ENCODE measurements at regions of chr12 and their contacts with region 1.

Region 1: DNA sequence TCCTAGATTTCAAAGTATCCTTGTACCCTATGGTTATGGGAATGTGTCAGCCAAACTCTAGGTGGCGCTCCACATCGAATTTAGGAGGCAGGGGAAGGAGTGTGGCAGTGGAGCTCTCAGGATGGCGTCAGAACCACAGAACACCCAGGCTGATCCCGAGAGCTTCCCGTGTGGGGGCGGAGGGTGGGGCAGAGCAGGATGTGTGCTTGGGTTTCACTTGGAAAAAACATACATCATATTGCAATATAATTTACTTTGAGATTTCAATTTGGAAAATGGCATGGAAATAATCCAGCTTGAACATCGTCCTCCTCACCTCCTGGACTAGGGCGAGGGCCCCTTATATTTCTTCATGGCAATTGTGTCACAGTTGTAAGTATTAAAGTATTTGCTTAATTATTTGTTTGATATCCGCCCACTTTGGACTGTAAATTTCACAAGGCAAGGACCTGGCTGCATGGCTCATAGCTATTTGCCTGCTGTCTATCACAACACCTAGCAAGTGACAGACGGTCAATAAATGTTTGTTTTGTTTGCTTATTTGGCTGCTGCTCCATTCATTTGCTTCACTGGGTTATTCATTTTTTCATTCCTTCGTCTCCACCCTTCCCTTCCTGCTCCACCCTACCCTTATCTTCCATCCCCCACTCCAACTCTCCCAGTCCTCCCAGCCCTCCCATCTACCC is 221.5 kb upstream of the HMGA2 start:
- DNase-seq: peak; percentile 76
- ATAC-seq: peak; percentile 90
- H3K4me3 ChIP-seq: peak overlapping the region; percentile 39 to 59
- H3K27ac ChIP-seq: peak overlapping the region; percentile 87
- H3K4me1 ChIP-seq: peaks cover 34% of the 10 kb centered on the region
- H3K27me3 ChIP-seq: no peaks in the 10 kb centered on the region
- CTCF ChIP-seq: peak; percentile 81

Region 2: DNA sequence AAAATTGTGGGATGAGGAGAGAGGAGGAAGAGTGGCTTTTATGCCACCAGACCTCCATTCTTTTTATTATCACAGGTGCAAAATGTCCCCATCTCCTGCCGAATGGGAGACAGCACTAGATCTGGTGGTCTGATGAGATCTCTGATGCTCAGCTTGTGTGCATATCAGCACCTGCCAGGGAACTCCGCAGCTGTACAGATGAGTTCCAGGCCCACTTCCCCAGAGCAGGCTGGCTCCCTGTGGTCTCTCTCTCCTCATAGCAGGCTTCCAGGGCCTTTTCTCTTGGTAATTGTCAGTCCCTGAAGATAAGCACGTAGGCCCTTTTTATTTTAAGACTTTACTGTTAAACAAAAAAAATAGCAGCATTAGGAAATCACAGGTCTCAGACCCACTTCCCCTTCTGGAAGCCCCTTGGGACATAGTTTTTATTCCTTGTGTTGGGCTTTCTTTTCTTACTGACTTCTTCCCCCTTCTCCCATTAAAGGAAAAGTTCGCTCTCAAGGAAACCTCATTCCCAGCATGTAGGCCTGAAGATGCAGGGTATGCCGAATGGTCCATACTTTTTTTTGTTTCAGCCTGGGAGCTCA is 782.8 kb before region 1 on chr12:
- CTCF ChIA-PET with region 1: interaction called, 13 read pairs
- POLR2A ChIA-PET with region 1: no interaction called
- in situ Hi-C with region 1: no loop called
- intact Hi-C with region 1: no loop called
- DNase-seq: no peak
- ATAC-seq: no peak
- H3K4me3 ChIP-seq: no peak overlapping the region
- H3K27ac ChIP-seq: no peak overlapping the region
- H3K4me1 ChIP-seq: no peaks in the 10 kb centered on the region
- H3K27me3 ChIP-seq: no peaks in the 10 kb centered on the region
- CTCF ChIP-seq: no peak

Region 3: DNA sequence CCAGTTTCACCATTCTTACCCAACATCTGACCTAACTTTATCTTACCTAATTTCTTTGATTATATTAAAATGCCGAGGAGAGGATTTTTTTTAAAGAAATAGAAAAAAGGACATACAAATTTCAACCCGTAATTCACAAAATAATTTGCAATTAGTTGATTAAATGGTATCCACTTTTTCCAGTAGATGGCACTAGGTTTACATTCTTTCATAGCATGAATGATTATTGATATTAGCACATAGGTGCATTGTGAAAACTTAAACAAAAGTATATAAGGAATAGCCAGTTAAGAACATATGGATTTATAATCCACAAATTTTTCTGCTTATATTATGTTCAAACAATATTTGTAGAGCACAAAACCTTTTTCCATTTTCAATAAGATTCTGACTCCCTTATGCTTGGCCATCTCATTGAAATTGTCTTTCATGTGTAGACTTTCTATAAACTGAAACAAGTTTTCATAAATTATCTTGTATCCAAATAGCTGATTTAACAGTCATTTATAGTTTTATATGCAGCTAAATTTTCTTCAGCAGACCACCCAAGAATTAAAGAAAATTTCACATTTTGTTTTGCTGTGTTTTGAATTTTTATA is 288.9 kb before region 1 on chr12:
- CTCF ChIA-PET with region 1: no interaction called
- POLR2A ChIA-PET with region 1: no interaction called
- in situ Hi-C with region 1: no loop called
- intact Hi-C with region 1: loop called (anchors 5 kb)
- DNase-seq: no peak
- ATAC-seq: no peak
- H3K4me3 ChIP-seq: no peak overlapping the region
- H3K27ac ChIP-seq: peak overlapping the region; percentile 3; the same call in 1 of the 2 replicates
- H3K4me1 ChIP-seq: no peaks in the 10 kb centered on the region; the same call in 1 of the 2 replicates
- H3K27me3 ChIP-seq: no peaks in the 10 kb centered on the region
- CTCF ChIP-seq: peak; percentile 57; the same call in 1 of the 2 replicates

Region 4: GRCh38 chr12:65740873-65741600 is 138.3 kb after region 1 on chr12:
- CTCF ChIA-PET with region 1: interaction called, 10 read pairs
- POLR2A ChIA-PET with region 1: no interaction called
- in situ Hi-C with region 1: no loop called
- intact Hi-C with region 1: loop called (anchors 10 kb)
- DNase-seq: peak; percentile 27
- ATAC-seq: peak; percentile 95
- H3K4me3 ChIP-seq: peak overlapping the region; percentile 75 to 83
- H3K27ac ChIP-seq: peak overlapping the region; percentile 93
- H3K4me1 ChIP-seq: peaks cover 7% of the 10 kb centered on the region
- H3K27me3 ChIP-seq: no peaks in the 10 kb centered on the region
- CTCF ChIP-seq: no peak

Region 5: GRCh38 chr12:65823513-65824375 is 221.0 kb after region 1 on chr12:
- CTCF ChIA-PET with region 1: interaction called, 4 read pairs
- POLR2A ChIA-PET with region 1: interaction called, 7 read pairs
- in situ Hi-C with region 1: no loop called
- intact Hi-C with region 1: loop called (anchors 1 kb)
- DNase-seq: peak; percentile 69
- ATAC-seq: peak; percentile 65
- H3K4me3 ChIP-seq: peak overlapping the region; percentile 79 to 82
- H3K27ac ChIP-seq: peak overlapping the region; percentile 97
- H3K4me1 ChIP-seq: peaks cover 34% of the 10 kb centered on the region
- H3K27me3 ChIP-seq: no peaks in the 10 kb centered on the region
- CTCF ChIP-seq: no peak

Region 6: DNA sequence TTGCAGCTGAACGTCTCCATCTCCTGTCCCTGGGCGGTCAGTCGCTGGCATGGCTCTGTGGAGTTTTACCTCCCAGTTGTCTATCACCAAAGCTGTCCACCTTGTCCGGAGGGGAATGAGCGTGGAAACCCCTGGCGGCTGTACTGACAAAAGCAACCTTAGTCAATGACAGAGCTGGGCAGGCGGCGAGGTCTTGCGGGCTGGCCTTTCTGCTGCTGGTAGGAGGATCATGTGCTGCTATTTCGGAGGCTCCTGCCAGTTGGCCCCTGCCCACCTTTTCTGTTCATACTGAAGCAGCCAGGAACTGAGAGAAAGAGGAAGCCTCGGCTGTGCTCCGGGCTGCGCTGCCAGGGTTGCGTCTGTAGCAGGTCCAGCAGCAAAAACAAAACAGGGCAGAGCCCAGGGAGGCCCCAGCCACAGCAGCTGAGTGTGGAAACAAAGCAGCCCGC is 279.2 kb after region 1 on chr12:
- CTCF ChIA-PET with region 1: interaction called, 4 read pairs
- POLR2A ChIA-PET with region 1: no interaction called
- in situ Hi-C with region 1: no loop called
- intact Hi-C with region 1: loop called (anchors 10 kb)
- DNase-seq: no peak
- ATAC-seq: peak; percentile 24
- H3K4me3 ChIP-seq: no peak overlapping the region; a peak in 1 of 4 replicates
- H3K27ac ChIP-seq: peak overlapping the region; percentile 98
- H3K4me1 ChIP-seq: peaks cover 89% of the 10 kb centered on the region
- H3K27me3 ChIP-seq: no peaks in the 10 kb centered on the region
- CTCF ChIP-seq: no peak

Measured in Panc1 (cell line).